ENCODE measurements at regions of chr1 and their contacts with region 1.

Region 1: GRCh38 chr1:67441739-67442138 is 11.5 kb upstream of the SERBP1 start:
- DNase-seq: no peak
- ATAC-seq: no peak
- H3K4me3 ChIP-seq: no peak overlapping the region
- H3K4me3 Mint-ChIP-seq: no peak overlapping the region
- H3K27ac ChIP-seq: no peak overlapping the region
- H3K27ac Mint-ChIP-seq: peak overlapping the region in 1 of 9 donors; percentile 21
- H3K4me1 ChIP-seq: no peaks in the 10 kb centered on the region
- H3K4me1 Mint-ChIP-seq: peaks cover 0 to 6% (median 0%) of the 10 kb centered on the region in 7 donors
- H3K27me3 ChIP-seq: no peaks in the 10 kb centered on the region
- H3K27me3 Mint-ChIP-seq: peaks cover 0 to 3% (median 0%) of the 10 kb centered on the region in 5 donors

Region 2: GRCh38 chr1:67524143-67525052 is 82.7 kb after region 1 on chr1:
- CTCF ChIA-PET with region 1: interaction called, 10 read pairs
- POLR2A ChIA-PET with region 1: no interaction called
- intact Hi-C with region 1: no loop called
- DNase-seq: no peak
- ATAC-seq: no peak
- H3K4me3 ChIP-seq: no peak overlapping the region
- H3K4me3 Mint-ChIP-seq: no peak overlapping the region
- H3K27ac ChIP-seq: no peak overlapping the region
- H3K27ac Mint-ChIP-seq: no peak overlapping the region
- H3K4me1 ChIP-seq: no peaks in the 10 kb centered on the region
- H3K4me1 Mint-ChIP-seq: peaks cover 0 to 5% (median 0%) of the 10 kb centered on the region in 7 donors
- H3K27me3 ChIP-seq: no peaks in the 10 kb centered on the region
- H3K27me3 Mint-ChIP-seq: peaks cover 8 to 38% (median 15%) of the 10 kb centered on the region in 5 donors